Natural killer cell (primary cell): ENCODE measurements at regions of chr7 and their contacts with region 1.

Region 1: GRCh38 chr7:107725151-107725740 is 18.7 kb upstream of the CBLL1 start:
- DNase-seq: peak in 1 of 2 donors; percentile 83
- ATAC-seq: peak in 1 of 3 donors; percentile 45
- H3K4me3 ChIP-seq: no peak overlapping the region
- H3K4me3 Mint-ChIP-seq: no peak overlapping the region
- H3K27ac ChIP-seq: no peak overlapping the region
- H3K27ac Mint-ChIP-seq: no peak overlapping the region
- H3K4me1 ChIP-seq: no peaks in the 10 kb centered on the region
- H3K4me1 Mint-ChIP-seq: no peaks in the 10 kb centered on the region
- H3K27me3 ChIP-seq: no peaks in the 10 kb centered on the region
- H3K27me3 Mint-ChIP-seq: peaks cover 16 to 19% of the 10 kb centered on the region in 2 donors
- CTCF ChIP-seq: peak; percentile 72

Region 2: DNA sequence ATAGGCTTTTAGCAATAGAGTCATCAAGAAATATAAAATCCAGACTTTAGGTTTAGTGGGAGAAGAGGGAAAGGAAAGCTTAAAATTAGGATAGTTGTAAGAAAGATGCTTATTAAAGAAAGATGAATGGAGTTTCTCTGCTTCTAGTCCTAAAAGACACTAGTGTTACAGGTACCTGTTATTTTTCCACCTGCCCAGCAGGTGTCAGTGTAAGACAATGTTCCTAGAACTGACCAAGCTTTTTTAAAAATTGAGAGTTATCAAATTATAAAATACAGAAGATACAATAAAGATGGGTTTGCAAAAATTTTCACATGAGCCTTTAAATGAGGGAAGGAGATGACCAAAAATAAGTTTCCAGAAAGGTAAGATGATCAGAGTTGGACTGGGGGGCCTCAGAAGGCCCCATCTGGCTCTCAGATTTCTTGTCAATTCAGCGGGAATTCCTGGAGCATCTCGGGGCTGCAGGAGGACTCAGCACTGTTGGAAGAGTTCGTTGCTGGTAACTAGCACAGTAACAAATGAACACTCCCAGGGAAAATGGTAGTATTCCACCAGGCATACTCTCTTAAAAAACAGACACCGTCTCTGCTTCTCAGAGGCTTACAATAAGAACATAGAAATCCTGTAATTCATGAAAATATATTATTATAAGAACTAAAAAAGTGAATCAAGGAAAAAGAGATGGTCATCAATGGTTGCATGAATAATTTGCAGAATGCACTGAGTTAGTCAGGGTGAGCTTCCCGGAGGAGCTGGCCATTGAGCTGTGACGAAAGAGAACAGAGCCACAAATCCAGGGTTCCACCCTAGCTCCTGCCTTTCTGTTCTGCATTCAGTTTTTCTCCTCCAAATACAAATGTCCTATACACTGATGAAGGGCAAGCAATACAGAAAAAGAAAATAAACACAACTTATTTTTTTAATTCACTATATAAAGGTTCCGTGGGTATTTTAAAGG is 932.0 kb before region 1 on chr7:
- intact Hi-C with region 1: loop called (anchors 5 kb)
- DNase-seq: peak in 1 of 2 donors; percentile 82
- ATAC-seq: peak; percentile 57 to 73 (median 69)
- H3K4me3 ChIP-seq: no peak overlapping the region
- H3K4me3 Mint-ChIP-seq: no peak overlapping the region
- H3K27ac ChIP-seq: no peak overlapping the region
- H3K27ac Mint-ChIP-seq: no peak overlapping the region
- H3K4me1 ChIP-seq: no peaks in the 10 kb centered on the region
- H3K4me1 Mint-ChIP-seq: no peaks in the 10 kb centered on the region
- H3K27me3 ChIP-seq: no peaks in the 10 kb centered on the region
- H3K27me3 Mint-ChIP-seq: peaks cover 0 to 8% of the 10 kb centered on the region in 2 donors
- CTCF ChIP-seq: peak; percentile 85

Region 3: GRCh38 chr7:107462740-107463444 is 262.4 kb before region 1 on chr7:
- intact Hi-C with region 1: loop called (anchors 1 kb)
- DNase-seq: peak; percentile 19 to 77
- ATAC-seq: peak; percentile 64 to 78 (median 67)
- H3K4me3 ChIP-seq: no peak overlapping the region
- H3K4me3 Mint-ChIP-seq: no peak overlapping the region
- H3K27ac ChIP-seq: no peak overlapping the region
- H3K27ac Mint-ChIP-seq: no peak overlapping the region
- H3K4me1 ChIP-seq: no peaks in the 10 kb centered on the region
- H3K4me1 Mint-ChIP-seq: no peaks in the 10 kb centered on the region
- H3K27me3 ChIP-seq: no peaks in the 10 kb centered on the region
- H3K27me3 Mint-ChIP-seq: no peaks in the 10 kb centered on the region
- CTCF ChIP-seq: peak; percentile 30